ENCODE measurements at regions of chr13 and their contacts with region 1.

Region 1: GRCh38 chr13:40445557-40445990 is 220.9 kb downstream of the FOXO1 start:
- DNase-seq: peak; percentile 99
- H3K4me3 ChIP-seq: no peak overlapping the region
- H3K27ac ChIP-seq: peak overlapping the region; percentile 99
- H3K4me1 ChIP-seq: peaks cover 36% of the 10 kb centered on the region
- H3K27me3 ChIP-seq: no peaks in the 10 kb centered on the region
- CTCF ChIP-seq: no peak
- POLR2A ChIP-seq: peak; percentile 42

Region 2: GRCh38 chr13:39684531-39685137 is 760.9 kb before region 1 on chr13:
- CTCF ChIA-PET with region 1: no interaction called
- POLR2A ChIA-PET with region 1: no interaction called
- dilution Hi-C with region 1: no loop called
- intact Hi-C with region 1: loop called (anchors 10 kb)
- DNase-seq: peak; percentile 54
- H3K4me3 ChIP-seq: no peak overlapping the region
- H3K27ac ChIP-seq: no peak overlapping the region
- H3K4me1 ChIP-seq: no peaks in the 10 kb centered on the region
- H3K27me3 ChIP-seq: no peaks in the 10 kb centered on the region
- CTCF ChIP-seq: peak in 1 of 2 donors; percentile 8
- POLR2A ChIP-seq: no peak

Region 3: GRCh38 chr13:39952249-39953233 is 493.0 kb before region 1 on chr13:
- CTCF ChIA-PET with region 1: no interaction called
- POLR2A ChIA-PET with region 1: no interaction called
- dilution Hi-C with region 1: no loop called
- intact Hi-C with region 1: loop called (anchors 1 kb)
- DNase-seq: peak; percentile 97
- H3K4me3 ChIP-seq: no peak overlapping the region
- H3K27ac ChIP-seq: peak overlapping the region; percentile 88
- H3K4me1 ChIP-seq: peaks cover 24% of the 10 kb centered on the region
- H3K27me3 ChIP-seq: no peaks in the 10 kb centered on the region
- CTCF ChIP-seq: no peak
- POLR2A ChIP-seq: no peak

Region 4: GRCh38 chr13:40116008-40116407 is 329.6 kb before region 1 on chr13:
- CTCF ChIA-PET with region 1: no interaction called
- POLR2A ChIA-PET with region 1: no interaction called
- dilution Hi-C with region 1: no loop called
- intact Hi-C with region 1: loop called (anchors 1 kb)
- DNase-seq: peak; percentile 98
- H3K4me3 ChIP-seq: no peak overlapping the region
- H3K27ac ChIP-seq: peak overlapping the region; percentile 93
- H3K4me1 ChIP-seq: peaks cover 17% of the 10 kb centered on the region
- H3K27me3 ChIP-seq: no peaks in the 10 kb centered on the region
- CTCF ChIP-seq: no peak
- POLR2A ChIP-seq: no peak

Region 5: GRCh38 chr13:40401911-40402776 is 43.4 kb before region 1 on chr13:
- CTCF ChIA-PET with region 1: no interaction called
- POLR2A ChIA-PET with region 1: no interaction called
- dilution Hi-C with region 1: no loop called
- intact Hi-C with region 1: loop called (anchors 1 kb)
- DNase-seq: peak; percentile 93
- H3K4me3 ChIP-seq: no peak overlapping the region
- H3K27ac ChIP-seq: peak overlapping the region; percentile 61
- H3K4me1 ChIP-seq: peaks cover 31% of the 10 kb centered on the region
- H3K27me3 ChIP-seq: no peaks in the 10 kb centered on the region
- CTCF ChIP-seq: no peak
- POLR2A ChIP-seq: no peak

Region 6: DNA sequence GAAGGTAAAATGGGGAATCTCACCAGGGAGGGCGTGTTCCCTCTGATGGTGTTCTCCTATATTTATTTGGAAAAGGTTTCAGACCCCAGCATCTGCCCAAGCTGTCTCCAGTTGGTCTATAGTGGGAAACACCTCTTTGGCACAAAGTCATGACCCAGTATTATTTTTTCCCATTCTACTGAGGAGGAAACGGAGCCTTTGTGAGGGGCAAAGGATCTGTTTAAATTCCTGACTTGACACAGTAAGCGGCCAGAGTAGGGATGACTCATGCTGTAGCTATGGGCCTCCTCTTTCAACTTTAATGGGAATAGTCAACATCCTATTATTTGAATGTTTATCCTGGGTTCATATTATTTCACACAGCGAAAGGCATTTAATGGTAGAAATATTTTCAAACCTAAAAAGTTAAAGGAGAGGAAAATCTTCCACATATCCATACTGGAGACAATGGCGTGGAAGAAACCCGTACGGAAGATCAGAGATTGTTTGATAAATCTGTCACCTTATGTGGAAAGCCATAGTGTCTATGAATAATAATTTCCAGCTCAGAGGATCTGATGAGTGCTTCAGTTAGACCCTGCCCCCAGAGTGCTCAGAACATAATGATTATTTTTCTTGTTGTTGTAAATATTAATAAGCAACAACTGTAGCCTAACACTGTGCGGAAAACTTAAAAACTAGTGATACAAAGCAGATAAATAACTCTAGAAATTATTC is 94.9 kb after region 1 on chr13:
- CTCF ChIA-PET with region 1: no interaction called
- POLR2A ChIA-PET with region 1: interaction called, 3 read pairs
- dilution Hi-C with region 1: no loop called
- intact Hi-C with region 1: loop called (anchors 1 kb)
- DNase-seq: peak; percentile 96
- H3K4me3 ChIP-seq: no peak overlapping the region
- H3K27ac ChIP-seq: peak overlapping the region; percentile 80
- H3K4me1 ChIP-seq: peaks cover 18% of the 10 kb centered on the region
- H3K27me3 ChIP-seq: no peaks in the 10 kb centered on the region
- CTCF ChIP-seq: no peak
- POLR2A ChIP-seq: no peak

Region 7: GRCh38 chr13:40666045-40666904 is 220.7 kb after region 1 on chr13 and contains the start of gene FOXO1:
- CTCF ChIA-PET with region 1: interaction called, 4 read pairs
- POLR2A ChIA-PET with region 1: no interaction called
- dilution Hi-C with region 1: no loop called
- intact Hi-C with region 1: loop called (anchors 1 kb)
- DNase-seq: peak; percentile 79
- H3K4me3 ChIP-seq: peak within 1 kb of the TSS; percentile 67 to 95 (median 86)
- H3K27ac ChIP-seq: peak within 1 kb of the TSS; percentile 81
- H3K4me1 ChIP-seq: peaks cover 24% of the 10 kb centered on the region
- H3K27me3 ChIP-seq: no peaks in the 10 kb centered on the region
- CTCF ChIP-seq: no peak
- POLR2A ChIP-seq: peak; percentile 97
- total RNA-seq, gene FOXO1: 47.6 and 48.5 TPM in 2 replicates

Measured in endothelial cell of umbilical vein (primary cell).